ENCODE measurements at regions of chr1 and their contacts with region 1.

Region 1: GRCh38 chr1:6602669-6603237 is at the start of gene KLHL21:
- DNase-seq: peak; percentile 93
- ATAC-seq: peak; percentile 45
- H3K4me3 Mint-ChIP-seq: peak within 1 kb of the TSS; percentile 97
- H3K27ac Mint-ChIP-seq: peak within 1 kb of the TSS; percentile 95
- H3K4me1 Mint-ChIP-seq: peaks cover 30% of the 10 kb centered on the region
- H3K27me3 Mint-ChIP-seq: no peaks in the 10 kb centered on the region
- total RNA-seq, gene KLHL21: 12.4 to 15.7 TPM

Region 2: DNA sequence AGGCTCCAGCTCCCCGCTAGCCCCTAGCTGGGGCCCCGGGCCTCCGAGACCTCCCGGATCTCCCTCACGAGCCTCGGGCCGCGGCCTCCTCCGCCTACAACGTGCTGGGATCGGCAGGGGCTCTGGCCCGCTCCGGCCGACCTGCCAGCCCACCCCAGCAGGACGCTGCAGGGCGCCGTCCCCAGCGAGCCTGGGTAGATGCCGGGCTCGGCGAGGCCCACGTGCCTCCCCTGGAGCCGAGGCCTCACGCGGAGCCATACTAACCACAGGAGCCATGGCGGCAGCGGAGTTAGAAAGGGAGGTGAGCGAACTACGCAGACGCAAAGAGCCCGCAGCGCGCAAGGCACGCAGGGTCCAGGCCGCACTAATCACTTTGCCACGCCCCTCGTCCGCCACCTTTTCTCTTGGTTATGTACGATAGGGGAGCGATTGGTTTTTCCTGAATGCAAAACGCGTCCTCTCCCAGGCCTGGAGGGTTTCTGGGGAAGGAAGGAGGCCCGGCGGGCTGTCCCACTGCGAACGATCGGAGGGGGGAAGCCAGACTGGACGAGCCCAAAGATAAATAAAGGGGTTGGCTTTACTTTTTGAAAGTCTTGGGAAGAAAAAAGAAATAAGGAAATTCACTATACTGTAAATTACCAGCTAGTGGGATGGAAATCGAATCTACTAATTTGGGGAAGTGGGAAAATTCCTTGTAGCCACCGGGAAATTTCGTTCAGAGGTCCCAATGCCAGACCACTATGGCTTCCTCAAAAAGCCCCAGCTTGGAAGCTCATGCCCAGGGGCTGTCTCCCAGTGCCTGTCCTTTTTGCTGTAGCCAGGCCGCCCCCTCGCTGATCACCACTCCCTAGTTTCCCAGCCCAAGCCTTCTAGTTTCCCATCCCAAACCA is 403.2 kb before region 1 on chr1 and contains the start of gene RPL22:
- CTCF ChIA-PET with region 1: no interaction called
- POLR2A ChIA-PET with region 1: no interaction called
- intact Hi-C with region 1: loop called in 1 of 2 experiments (anchors 2 kb)
- DNase-seq: peak; percentile 99
- ATAC-seq: peak; percentile 99
- H3K4me3 Mint-ChIP-seq: peak within 1 kb of the TSS; percentile 99
- H3K27ac Mint-ChIP-seq: peak within 1 kb of the TSS; percentile 96
- H3K4me1 Mint-ChIP-seq: peaks cover 39% of the 10 kb centered on the region
- H3K27me3 Mint-ChIP-seq: no peaks in the 10 kb centered on the region
- total RNA-seq, gene RPL22: 392 to 475 TPM

Region 3: DNA sequence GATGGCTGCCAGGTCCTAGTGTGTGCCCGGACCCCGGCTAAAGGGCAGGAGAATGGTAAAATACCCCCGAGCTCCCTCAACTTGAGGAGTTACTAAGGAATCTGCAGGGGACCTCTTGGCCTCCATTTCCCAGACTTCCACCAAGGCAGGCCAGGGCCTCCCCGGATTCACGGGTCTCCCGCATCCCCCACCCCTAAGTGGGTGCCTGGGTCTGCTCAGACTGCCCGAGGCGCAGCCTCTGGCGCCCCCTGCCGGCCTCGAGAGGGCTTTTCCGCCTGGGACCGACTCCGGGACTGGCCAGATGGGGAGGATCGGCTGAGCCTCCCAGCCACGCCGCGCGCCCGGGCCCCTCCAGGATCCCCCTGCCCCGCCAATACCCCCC is 113.0 kb before region 1 on chr1:
- CTCF ChIA-PET with region 1: interaction called, 3 read pairs
- POLR2A ChIA-PET with region 1: no interaction called
- intact Hi-C with region 1: loop called in 1 of 2 experiments (anchors 1 kb)
- DNase-seq: peak; percentile 88
- ATAC-seq: peak; percentile 71
- H3K4me3 Mint-ChIP-seq: peak overlapping the region; percentile 74
- H3K27ac Mint-ChIP-seq: peak overlapping the region; percentile 63
- H3K4me1 Mint-ChIP-seq: peaks cover 18% of the 10 kb centered on the region
- H3K27me3 Mint-ChIP-seq: peaks cover 9% of the 10 kb centered on the region

Region 4: DNA sequence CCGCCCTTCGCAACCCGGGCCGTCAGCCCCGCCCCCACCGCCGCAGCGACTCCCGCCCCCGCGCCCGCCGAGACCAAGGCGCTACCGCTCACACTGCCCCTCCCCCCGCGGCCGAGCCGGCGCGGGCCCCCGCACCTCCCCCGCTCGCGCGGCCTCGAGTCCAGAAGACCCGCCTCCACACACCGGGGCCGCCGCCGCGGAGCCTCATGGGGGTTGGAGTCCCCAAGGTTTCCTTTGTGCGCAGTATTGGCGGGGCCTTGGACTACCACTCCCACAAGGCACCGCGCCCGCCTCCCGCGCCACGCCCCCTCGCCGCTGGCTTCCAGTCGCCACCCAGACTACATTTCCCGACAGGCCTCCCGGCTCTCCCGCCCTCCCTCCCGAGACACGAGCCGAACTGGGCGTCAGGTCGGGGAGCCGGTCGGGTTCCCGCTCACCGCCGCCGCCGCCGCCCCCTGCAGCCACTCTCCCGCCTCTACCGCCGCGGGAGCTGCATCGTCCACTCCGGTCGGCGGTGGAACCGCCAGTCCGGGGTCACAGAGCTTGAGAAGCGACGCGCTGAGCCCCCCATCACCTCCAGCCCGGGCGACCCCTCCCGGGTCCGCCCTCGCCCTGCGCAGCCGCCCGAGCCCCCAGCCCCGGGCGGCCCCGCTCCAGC is 10.7 kb after region 1 on chr1 and contains the start of gene PHF13:
- CTCF ChIA-PET with region 1: interaction called, 11 read pairs
- POLR2A ChIA-PET with region 1: interaction called, 6 read pairs
- intact Hi-C with region 1: loop called (anchors 1 kb)
- DNase-seq: peak; percentile 100
- ATAC-seq: peak; percentile 98
- H3K4me3 Mint-ChIP-seq: peak within 1 kb of the TSS; percentile 80
- H3K27ac Mint-ChIP-seq: peak within 1 kb of the TSS; percentile 87
- H3K4me1 Mint-ChIP-seq: peaks cover 20% of the 10 kb centered on the region
- H3K27me3 Mint-ChIP-seq: no peaks in the 10 kb centered on the region
- total RNA-seq, gene PHF13: 13.2 to 13.6 TPM

Region 5: GRCh38 chr1:6922096-6922931 is 319.6 kb after region 1 on chr1:
- CTCF ChIA-PET with region 1: no interaction called
- POLR2A ChIA-PET with region 1: no interaction called
- intact Hi-C with region 1: no loop called
- DNase-seq: no peak
- ATAC-seq: no peak
- H3K4me3 Mint-ChIP-seq: no peak overlapping the region
- H3K27ac Mint-ChIP-seq: no peak overlapping the region
- H3K4me1 Mint-ChIP-seq: no peaks in the 10 kb centered on the region
- H3K27me3 Mint-ChIP-seq: no peaks in the 10 kb centered on the region

Region 6: DNA sequence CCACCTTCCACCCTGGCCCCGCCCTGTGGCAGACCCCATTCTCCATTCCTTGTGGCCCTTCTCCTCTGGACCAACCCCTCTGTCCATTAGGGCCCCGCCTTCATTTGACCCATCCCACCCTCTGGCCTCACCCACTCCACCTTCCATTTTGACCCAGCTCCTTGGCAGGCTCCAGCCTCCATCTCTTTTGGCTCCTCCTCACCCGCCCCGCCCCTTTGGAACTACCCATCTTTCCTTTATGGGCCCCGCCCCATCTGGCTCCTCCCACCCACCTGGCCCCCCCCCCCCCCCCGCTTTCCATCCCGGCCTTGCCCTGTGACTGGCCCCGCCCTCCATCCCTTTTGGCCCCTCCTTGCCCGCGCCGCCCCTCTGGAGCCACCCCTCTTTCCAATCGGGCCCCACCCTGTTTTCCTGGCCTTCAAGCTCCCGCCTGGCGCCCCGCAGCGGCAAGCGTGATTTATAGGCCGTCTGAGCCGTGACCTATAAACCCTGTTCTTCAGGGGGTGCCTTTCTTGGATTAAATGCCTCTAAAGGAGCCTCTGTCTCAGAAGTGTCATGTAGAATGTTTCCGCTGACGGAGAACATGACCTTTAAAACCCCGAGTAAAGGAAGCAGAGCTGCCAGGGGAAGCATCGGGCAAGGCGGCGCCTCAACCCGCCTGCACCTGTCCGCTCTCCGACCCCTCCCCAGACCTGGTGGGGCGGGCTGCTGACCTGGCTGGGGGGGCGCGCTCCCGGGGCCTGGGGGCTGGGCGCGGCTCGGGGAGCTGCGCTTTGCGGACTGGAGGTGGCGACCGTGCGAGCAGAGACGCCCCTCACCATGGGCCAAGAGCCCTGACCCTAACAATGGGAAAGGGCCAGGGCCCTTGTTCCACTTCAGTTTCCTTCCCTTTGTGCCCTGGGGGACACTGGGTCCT is 360.5 kb after region 1 on chr1:
- CTCF ChIA-PET with region 1: no interaction called
- POLR2A ChIA-PET with region 1: no interaction called
- intact Hi-C with region 1: loop called in 1 of 2 experiments (anchors 2 kb)
- DNase-seq: peak; percentile 93
- ATAC-seq: peak; percentile 63
- H3K4me3 Mint-ChIP-seq: peak overlapping the region; percentile 69
- H3K27ac Mint-ChIP-seq: peak overlapping the region; percentile 85
- H3K4me1 Mint-ChIP-seq: peaks cover 22% of the 10 kb centered on the region
- H3K27me3 Mint-ChIP-seq: peaks cover 8% of the 10 kb centered on the region

Measured in activated CD4-positive, alpha-beta T cell treated with anti-CD3 and anti-CD28 coated beads for 36 hours (primary cell).